ENCODE measurements at regions of chr11 and their contacts with region 1.

Region 1: DNA sequence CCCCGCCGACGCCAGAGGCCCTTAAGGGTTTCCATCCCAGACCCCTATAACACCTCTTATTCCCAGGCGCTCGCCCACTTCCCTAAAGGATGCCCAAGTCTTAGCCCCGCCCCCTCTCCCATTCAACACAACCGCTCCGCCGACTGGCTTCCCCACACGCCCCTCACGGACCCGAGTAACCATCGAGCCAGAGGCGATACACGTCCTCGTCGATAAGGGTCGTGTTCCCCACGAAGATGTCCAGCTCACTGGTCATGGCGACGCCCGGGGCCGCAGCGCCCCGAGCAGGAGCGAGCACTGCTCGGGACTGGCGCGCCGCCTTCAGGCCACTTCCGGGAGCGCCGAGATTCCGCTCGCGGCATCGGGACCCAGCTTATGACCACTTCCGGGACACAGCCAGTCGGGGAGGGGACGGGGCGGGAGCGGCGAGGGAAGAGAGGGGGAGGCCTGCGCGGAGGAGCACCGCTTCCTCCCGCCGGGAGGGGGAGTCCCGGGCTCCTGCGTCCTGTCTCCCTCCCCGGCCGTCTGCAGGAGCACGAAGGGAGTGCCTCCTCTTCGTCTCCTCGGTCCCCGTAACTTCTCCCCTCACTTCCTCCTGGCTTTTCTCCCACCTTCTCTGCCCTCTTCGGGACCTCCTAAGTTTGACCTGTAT is at the start of gene FIBP:
- H3K4me3 ChIP-seq: peak within 1 kb of the TSS; percentile 87
- H3K27ac ChIP-seq: peak within 1 kb of the TSS; percentile 56; the same call in 1 of the 2 replicates
- H3K4me1 ChIP-seq: no peaks in the 10 kb centered on the region
- CTCF ChIP-seq: peak; percentile 96

Region 2: DNA sequence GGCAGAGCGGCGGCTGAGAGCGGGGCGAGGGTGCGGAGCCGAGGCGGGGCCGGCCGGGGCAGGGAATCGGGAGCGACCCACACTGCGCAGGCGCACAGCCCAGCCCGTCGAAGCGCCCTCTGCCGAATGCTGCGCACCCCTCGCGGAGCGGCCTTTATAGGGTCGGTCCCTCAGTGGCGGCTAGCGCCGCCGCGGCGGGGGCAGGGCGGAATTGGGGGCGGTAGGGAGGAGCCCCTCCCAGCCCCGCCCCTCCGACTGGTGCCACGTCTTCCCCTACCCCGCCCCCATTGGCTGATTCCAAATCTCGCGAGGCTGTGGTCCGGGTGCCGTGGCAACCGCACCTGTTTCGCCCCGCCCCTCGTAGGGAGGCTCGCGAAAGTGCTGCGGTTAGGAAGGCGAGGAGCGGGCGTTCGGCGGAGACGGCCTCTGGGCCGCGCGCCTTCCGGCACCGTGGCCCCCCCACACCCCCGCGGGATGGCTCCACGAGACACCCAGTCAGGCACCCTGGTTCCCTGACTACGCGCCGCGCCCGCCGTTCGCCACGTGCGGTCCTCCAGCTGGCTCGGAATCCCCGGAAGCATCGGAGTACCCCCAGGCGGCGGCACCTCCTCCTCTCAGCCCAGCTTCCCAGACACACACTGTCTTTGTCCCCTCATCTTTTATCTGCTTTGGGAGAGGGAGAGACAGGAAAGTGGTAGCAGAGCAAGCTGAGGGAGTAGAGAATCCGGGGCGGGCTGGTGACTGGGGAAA is 1009.6 kb before region 1 on chr11 and contains the start of gene EHD1:
- CTCF ChIA-PET with region 1: no interaction called
- POLR2A ChIA-PET with region 1: interaction called, 10 read pairs
- H3K4me3 ChIP-seq: peak within 1 kb of the TSS; percentile 85
- H3K27ac ChIP-seq: peak within 1 kb of the TSS; percentile 64; the same call in 1 of the 2 replicates
- H3K4me1 ChIP-seq: no peaks in the 10 kb centered on the region
- CTCF ChIP-seq: peak; percentile 89

Region 3: GRCh38 chr11:65773784-65774411 is 114.4 kb before region 1 on chr11:
- CTCF ChIA-PET with region 1: no interaction called
- POLR2A ChIA-PET with region 1: no interaction called
- H3K4me3 ChIP-seq: no peak overlapping the region
- H3K27ac ChIP-seq: no peak overlapping the region
- H3K4me1 ChIP-seq: no peaks in the 10 kb centered on the region
- CTCF ChIP-seq: no peak

Region 4: GRCh38 chr11:65786786-65787636 is 101.3 kb before region 1 on chr11 and contains the start of gene OVOL1:
- CTCF ChIA-PET with region 1: no interaction called
- POLR2A ChIA-PET with region 1: no interaction called
- H3K4me3 ChIP-seq: peak within 1 kb of the TSS; percentile 24
- H3K27ac ChIP-seq: no peak within 1 kb of the TSS
- H3K4me1 ChIP-seq: no peaks in the 10 kb centered on the region
- CTCF ChIP-seq: no peak

Region 5: DNA sequence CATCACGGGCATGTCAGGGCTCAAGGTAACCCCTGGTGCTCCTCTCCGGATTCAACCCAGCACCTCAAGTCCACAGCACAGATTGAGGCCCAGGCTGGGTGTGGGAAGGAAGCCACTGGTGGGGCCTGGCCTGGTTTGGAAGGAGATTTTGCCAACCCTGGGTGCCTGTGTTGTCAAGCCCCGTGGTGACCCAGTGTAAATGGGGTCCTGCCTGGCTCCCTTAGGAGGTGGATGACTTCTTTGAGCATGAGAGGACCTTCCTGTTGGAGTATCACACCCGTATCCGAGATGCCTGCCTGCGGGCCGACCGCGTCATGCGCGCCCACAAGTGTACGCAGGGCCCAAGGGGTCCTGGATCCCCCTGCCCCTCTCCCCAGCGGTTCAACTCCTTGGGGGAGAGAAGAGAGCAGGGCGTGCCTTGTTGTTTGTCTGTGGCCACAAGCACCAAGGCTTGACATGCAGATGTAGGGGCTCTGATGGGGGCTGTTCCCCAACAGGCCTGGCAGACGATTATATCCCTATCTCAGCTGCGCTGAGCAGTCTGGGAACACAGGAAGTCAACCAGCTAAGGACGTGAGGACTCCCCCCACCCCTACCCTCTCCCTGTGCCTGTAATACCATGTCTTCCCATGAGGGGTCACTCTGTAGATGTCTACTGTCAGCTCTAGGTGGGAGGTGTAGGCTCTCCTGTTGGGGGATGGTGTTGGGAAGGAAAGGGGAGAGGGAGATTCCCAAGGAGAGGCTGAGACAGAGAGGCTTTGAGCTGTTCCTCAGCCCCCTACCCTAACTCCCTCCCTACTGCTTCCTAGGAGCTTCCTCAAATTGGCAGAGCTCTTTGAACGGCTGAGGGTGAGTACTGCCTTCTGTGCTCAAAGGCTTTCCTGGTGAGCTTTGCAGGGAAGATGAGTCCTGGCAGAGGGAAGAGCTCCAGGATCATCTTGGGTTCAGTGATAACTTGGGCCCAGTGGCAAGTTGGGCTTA is 37.2 kb before region 1 on chr11:
- CTCF ChIA-PET with region 1: interaction called, 22 read pairs
- POLR2A ChIA-PET with region 1: interaction called, 7 read pairs
- H3K4me3 ChIP-seq: no peak overlapping the region
- H3K27ac ChIP-seq: no peak overlapping the region
- H3K4me1 ChIP-seq: no peaks in the 10 kb centered on the region
- CTCF ChIP-seq: no peak

Region 6: GRCh38 chr11:65868076-65868667 is 20.1 kb before region 1 on chr11:
- CTCF ChIA-PET with region 1: interaction called, 118 read pairs
- POLR2A ChIA-PET with region 1: interaction called, 13 read pairs
- H3K4me3 ChIP-seq: no peak overlapping the region
- H3K27ac ChIP-seq: no peak overlapping the region
- H3K4me1 ChIP-seq: no peaks in the 10 kb centered on the region
- CTCF ChIP-seq: no peak

Region 7: GRCh38 chr11:65900125-65900898 is 12.0 kb after region 1 on chr11 and contains the start of gene FOSL1:
- CTCF ChIA-PET with region 1: interaction called, 189 read pairs
- POLR2A ChIA-PET with region 1: interaction called, 74 read pairs
- H3K4me3 ChIP-seq: peak within 1 kb of the TSS; percentile 62
- H3K27ac ChIP-seq: peak within 1 kb of the TSS; percentile 25; the same call in 1 of the 2 replicates
- H3K4me1 ChIP-seq: no peaks in the 10 kb centered on the region
- CTCF ChIP-seq: no peak

Region 8: GRCh38 chr11:65919146-65920033 is 31.1 kb after region 1 on chr11 and contains the start of gene DRAP1:
- CTCF ChIA-PET with region 1: interaction called, 189 read pairs
- POLR2A ChIA-PET with region 1: interaction called, 19 read pairs
- H3K4me3 ChIP-seq: peak within 1 kb of the TSS; percentile 74
- H3K27ac ChIP-seq: peak within 1 kb of the TSS; percentile 63; the same call in 1 of the 2 replicates
- H3K4me1 ChIP-seq: no peaks in the 10 kb centered on the region; the same call in 1 of the 2 replicates
- CTCF ChIP-seq: no peak

Region 9: GRCh38 chr11:65961232-65961901 is 73.1 kb after region 1 on chr11 and contains the start of gene SART1:
- CTCF ChIA-PET with region 1: interaction called, 16 read pairs
- POLR2A ChIA-PET with region 1: interaction called, 3 read pairs
- H3K4me3 ChIP-seq: peak within 1 kb of the TSS; percentile 89
- H3K27ac ChIP-seq: peak within 1 kb of the TSS; percentile 77
- H3K4me1 ChIP-seq: no peaks in the 10 kb centered on the region
- CTCF ChIP-seq: no peak

Measured in HEK293 (cell line).